ENCODE measurements at regions of chr19 and their contacts with region 1.

Region 1: DNA sequence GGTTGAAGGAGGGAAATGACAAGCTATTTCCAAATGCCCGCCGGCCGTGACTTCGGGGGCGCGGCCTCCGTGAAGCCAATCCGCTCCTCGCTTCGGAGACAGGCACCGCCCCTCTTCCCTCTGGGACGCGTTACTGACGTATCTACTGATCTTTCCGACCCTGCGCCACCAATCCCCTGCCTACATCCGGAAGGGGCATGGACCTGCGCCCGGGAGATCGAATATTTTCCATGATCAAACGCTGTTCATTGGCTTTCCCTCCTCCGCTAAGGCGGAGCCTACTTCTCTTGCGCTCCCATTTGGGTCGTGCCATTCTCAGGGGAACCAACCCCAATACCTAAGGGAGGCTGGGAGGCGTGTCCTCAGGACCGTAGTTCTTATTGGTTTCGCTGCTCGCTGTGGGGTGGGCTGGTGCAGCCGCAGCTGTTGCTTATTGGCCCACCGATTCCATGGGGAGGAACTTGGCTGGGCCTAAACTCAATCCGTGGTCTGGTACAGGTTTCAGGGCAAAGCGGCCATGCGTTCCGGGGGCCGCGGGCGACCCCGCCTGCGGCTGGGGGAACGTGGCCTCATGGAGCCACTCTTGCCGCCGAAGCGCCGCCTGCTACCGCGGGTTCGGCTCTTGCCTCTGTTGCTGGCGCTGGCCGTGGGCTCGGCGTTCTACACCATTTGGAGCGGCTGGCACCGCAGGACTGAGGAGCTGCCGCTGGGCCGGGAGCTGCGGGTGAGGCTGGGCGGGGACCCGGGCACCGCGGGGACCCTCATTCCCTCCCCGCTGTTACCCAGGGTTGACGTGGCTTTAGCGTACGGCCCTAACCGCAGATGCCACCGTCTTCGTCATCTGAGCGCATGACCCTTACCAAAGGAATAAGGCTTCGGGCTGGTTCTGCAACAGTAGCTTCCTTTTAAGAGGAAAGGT is at the start of gene QPCTL:
- DNase-seq: peak; percentile 91 to 99 (median 94)
- ATAC-seq: peak; percentile 85
- H3K4me3 ChIP-seq: peak within 1 kb of the TSS; percentile 74 to 95
- H3K4me3 Mint-ChIP-seq: peak within 1 kb of the TSS; percentile 95
- H3K27ac ChIP-seq: peak within 1 kb of the TSS; percentile 90 to 91
- H3K27ac Mint-ChIP-seq: peak within 1 kb of the TSS; percentile 94
- H3K4me1 ChIP-seq: peaks cover 17% of the 10 kb centered on the region
- H3K4me1 Mint-ChIP-seq: peaks cover 27% of the 10 kb centered on the region
- H3K27me3 ChIP-seq: no peaks in the 10 kb centered on the region
- H3K27me3 Mint-ChIP-seq: no peaks in the 10 kb centered on the region
- CTCF ChIP-seq: no peak
- total RNA-seq, gene QPCTL: 7.0 to 7.5 TPM

Region 2: DNA sequence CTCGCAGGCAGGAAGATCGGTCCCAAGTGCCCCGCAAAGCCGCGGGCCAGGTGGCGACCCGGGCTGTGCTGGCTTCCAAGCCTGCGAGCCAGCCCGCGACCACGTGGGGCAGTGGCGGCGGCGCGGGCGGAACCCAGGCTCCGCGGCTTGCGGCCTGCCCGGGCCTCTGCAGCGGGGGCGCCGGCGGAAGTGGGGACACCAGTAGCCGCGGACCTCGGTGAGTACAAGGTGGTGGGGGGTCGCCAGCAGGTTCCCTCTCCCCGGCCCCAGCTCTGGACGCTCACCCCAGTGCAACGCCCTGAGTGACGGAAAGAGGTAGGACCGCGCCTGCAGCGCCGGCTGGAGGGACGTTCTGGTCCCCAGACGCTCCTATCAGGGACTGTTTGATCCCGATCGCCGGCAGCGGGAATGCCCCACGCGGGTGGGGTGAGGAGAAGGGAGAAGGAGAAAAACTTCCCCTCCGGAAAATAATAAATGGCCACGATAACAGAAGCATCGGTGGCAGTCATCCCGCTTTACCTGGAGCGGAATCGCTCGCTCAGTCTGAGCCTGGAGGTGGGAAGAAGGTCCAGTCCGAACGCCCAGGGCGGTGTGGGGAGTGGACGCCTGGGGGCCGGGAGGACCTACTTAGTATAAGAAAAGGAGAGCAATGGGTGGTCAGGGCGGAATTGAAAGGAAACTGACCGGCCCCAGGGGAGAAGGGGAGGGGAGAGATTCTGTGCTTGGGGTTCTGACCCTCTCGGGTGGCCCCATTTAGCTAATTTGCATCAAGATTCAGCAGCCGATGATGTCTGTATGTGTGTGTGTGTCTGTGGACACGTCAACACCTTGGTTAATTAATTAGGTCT is 613.2 kb before region 1 on chr19 and contains the start of gene GEMIN7:
- CTCF ChIA-PET with region 1: no interaction called
- POLR2A ChIA-PET with region 1: no interaction called
- intact Hi-C with region 1: loop called in 1 of 2 experiments (anchors 5 kb)
- DNase-seq: peak; percentile 64 to 89 (median 76)
- ATAC-seq: peak; percentile 70
- H3K4me3 ChIP-seq: peak within 1 kb of the TSS; percentile 95 to 98
- H3K4me3 Mint-ChIP-seq: peak within 1 kb of the TSS; percentile 90
- H3K27ac ChIP-seq: peak within 1 kb of the TSS; percentile 77 to 78
- H3K27ac Mint-ChIP-seq: peak within 1 kb of the TSS; percentile 81
- H3K4me1 ChIP-seq: peaks cover 46% of the 10 kb centered on the region
- H3K4me1 Mint-ChIP-seq: peaks cover 45% of the 10 kb centered on the region
- H3K27me3 ChIP-seq: no peaks in the 10 kb centered on the region
- H3K27me3 Mint-ChIP-seq: no peaks in the 10 kb centered on the region
- CTCF ChIP-seq: no peak
- total RNA-seq, gene GEMIN7: 7.2 to 7.7 TPM

Region 3: DNA sequence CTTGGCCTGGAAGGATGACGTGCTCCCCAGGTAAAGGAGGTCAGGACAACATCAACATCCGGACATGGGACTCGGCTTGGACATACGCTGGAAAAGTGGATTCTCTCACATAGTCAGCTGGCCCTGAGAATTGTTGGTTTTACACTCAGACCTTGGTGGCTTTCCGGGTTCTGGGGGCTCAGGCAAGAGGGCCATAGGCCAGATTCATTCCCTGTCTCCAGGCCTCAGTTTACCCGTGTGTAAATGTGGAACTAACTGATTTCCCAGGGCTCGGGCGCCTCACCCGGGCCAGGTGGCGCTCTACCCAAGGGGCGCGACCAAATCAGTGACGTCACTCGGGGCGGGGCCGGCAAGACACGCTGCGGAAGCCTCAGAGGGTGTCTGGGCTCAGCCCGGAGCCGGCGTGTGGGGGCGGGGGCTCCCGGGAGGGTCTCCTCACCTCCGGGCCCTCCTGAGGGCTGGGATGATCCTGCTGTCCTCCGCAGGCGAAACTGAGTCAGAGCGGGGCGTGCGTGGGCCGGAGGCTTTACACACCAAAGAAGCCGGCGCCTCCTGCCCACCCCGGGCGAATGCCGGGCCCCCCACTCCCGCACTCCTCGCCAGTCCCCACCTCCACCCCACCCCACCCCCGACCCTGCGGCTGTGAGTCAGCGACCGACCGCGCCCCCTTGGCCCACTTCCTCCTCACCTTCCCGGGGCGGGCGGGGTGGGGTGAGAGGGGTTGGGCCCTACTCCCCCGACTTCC is 186.0 kb before region 1 on chr19:
- CTCF ChIA-PET with region 1: interaction called, 3 read pairs
- POLR2A ChIA-PET with region 1: no interaction called
- intact Hi-C with region 1: loop called in 1 of 2 experiments (anchors 5 kb)
- DNase-seq: peak; percentile 93 to 99 (median 97)
- ATAC-seq: peak; percentile 79
- H3K4me3 ChIP-seq: peak overlapping the region; percentile 74 to 90
- H3K4me3 Mint-ChIP-seq: peak overlapping the region; percentile 88
- H3K27ac ChIP-seq: peak overlapping the region; percentile 85 to 91
- H3K27ac Mint-ChIP-seq: peak overlapping the region; percentile 93
- H3K4me1 ChIP-seq: peaks cover 33% of the 10 kb centered on the region
- H3K4me1 Mint-ChIP-seq: peaks cover 39% of the 10 kb centered on the region
- H3K27me3 ChIP-seq: no peaks in the 10 kb centered on the region
- H3K27me3 Mint-ChIP-seq: no peaks in the 10 kb centered on the region
- CTCF ChIP-seq: peak; percentile 32

Region 4: GRCh38 chr19:45643024-45643926 is 49.2 kb before region 1 on chr19:
- CTCF ChIA-PET with region 1: interaction called, 4 read pairs
- POLR2A ChIA-PET with region 1: interaction called, 5 read pairs
- intact Hi-C with region 1: loop called in 1 of 2 experiments (anchors 2 kb)
- DNase-seq: peak; percentile 80 to 95 (median 88)
- ATAC-seq: peak; percentile 32
- H3K4me3 ChIP-seq: peak overlapping the region in 1 of 2 experiments; percentile 53
- H3K4me3 Mint-ChIP-seq: peak overlapping the region; percentile 53
- H3K27ac ChIP-seq: peak overlapping the region in 1 of 2 experiments; percentile 93
- H3K27ac Mint-ChIP-seq: peak overlapping the region; percentile 75
- H3K4me1 ChIP-seq: peaks cover 46% of the 10 kb centered on the region
- H3K4me1 Mint-ChIP-seq: peaks cover 43% of the 10 kb centered on the region
- H3K27me3 ChIP-seq: no peaks in the 10 kb centered on the region
- H3K27me3 Mint-ChIP-seq: peaks cover 3% of the 10 kb centered on the region
- CTCF ChIP-seq: peak; percentile 96

Region 5: GRCh38 chr19:45705115-45705514 is 12.7 kb after region 1 on chr19:
- CTCF ChIA-PET with region 1: interaction called, 22 read pairs
- POLR2A ChIA-PET with region 1: no interaction called
- intact Hi-C with region 1: no loop called
- DNase-seq: no peak
- ATAC-seq: no peak
- H3K4me3 ChIP-seq: no peak overlapping the region
- H3K4me3 Mint-ChIP-seq: no peak overlapping the region
- H3K27ac ChIP-seq: no peak overlapping the region
- H3K27ac Mint-ChIP-seq: peak overlapping the region; percentile 57
- H3K4me1 ChIP-seq: peaks cover 8% of the 10 kb centered on the region
- H3K4me1 Mint-ChIP-seq: peaks cover 7% of the 10 kb centered on the region
- H3K27me3 ChIP-seq: no peaks in the 10 kb centered on the region
- H3K27me3 Mint-ChIP-seq: no peaks in the 10 kb centered on the region
- CTCF ChIP-seq: no peak

Region 6: GRCh38 chr19:45730389-45731288 is 38.2 kb after region 1 on chr19 and contains the start of gene FBXO46:
- CTCF ChIA-PET with region 1: interaction called, 5 read pairs
- POLR2A ChIA-PET with region 1: interaction called, 4 read pairs
- intact Hi-C with region 1: loop called (anchors 1 kb)
- DNase-seq: peak; percentile 82 to 97 (median 92)
- ATAC-seq: peak; percentile 98
- H3K4me3 ChIP-seq: peak within 1 kb of the TSS; percentile 74 to 91
- H3K4me3 Mint-ChIP-seq: peak within 1 kb of the TSS; percentile 97
- H3K27ac ChIP-seq: peak within 1 kb of the TSS; percentile 67 to 78
- H3K27ac Mint-ChIP-seq: peak within 1 kb of the TSS; percentile 92
- H3K4me1 ChIP-seq: peaks cover 19% of the 10 kb centered on the region
- H3K4me1 Mint-ChIP-seq: peaks cover 32% of the 10 kb centered on the region
- H3K27me3 ChIP-seq: no peaks in the 10 kb centered on the region
- H3K27me3 Mint-ChIP-seq: no peaks in the 10 kb centered on the region
- CTCF ChIP-seq: no peak
- total RNA-seq, gene FBXO46: 15.2 to 17.1 TPM

Region 7: DNA sequence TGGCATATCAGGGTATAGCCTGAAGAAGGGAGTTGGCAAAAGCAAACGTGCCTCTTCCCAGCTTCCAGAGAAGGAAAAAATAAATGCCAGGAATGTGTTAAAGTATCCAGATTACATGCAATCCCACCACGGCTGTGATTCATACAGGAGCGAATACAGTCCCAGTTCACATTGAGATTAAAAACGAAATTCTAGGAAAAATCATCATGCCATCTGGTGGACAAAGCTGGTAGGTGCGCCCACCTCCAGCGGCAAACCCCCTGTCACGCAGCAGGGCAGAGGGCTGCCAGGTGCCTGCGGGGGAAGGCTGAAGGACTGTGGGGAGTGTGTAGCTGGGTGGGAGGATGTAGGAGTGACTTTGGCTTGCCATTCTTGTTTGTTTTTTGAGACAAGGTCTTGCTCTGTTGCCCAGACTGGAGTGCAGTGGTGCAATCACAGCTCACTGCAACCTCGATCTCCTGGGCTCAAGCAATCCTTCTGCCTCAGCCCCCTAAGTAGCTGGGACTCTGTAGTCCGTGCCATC is 106.6 kb after region 1 on chr19:
- CTCF ChIA-PET with region 1: interaction called, 6 read pairs
- POLR2A ChIA-PET with region 1: no interaction called
- intact Hi-C with region 1: loop called in 1 of 2 experiments (anchors 2 kb)
- DNase-seq: peak; percentile 28 to 80 (median 66)
- ATAC-seq: peak; percentile 97
- H3K4me3 ChIP-seq: no peak overlapping the region
- H3K4me3 Mint-ChIP-seq: no peak overlapping the region
- H3K27ac ChIP-seq: no peak overlapping the region
- H3K27ac Mint-ChIP-seq: no peak overlapping the region
- H3K4me1 ChIP-seq: peaks cover 5% of the 10 kb centered on the region
- H3K4me1 Mint-ChIP-seq: peaks cover 7% of the 10 kb centered on the region
- H3K27me3 ChIP-seq: peaks cover 3 to 12% of the 10 kb centered on the region in 2 experiments
- H3K27me3 Mint-ChIP-seq: peaks cover 26% of the 10 kb centered on the region
- CTCF ChIP-seq: peak; percentile 92